ENCODE measurements at regions of chr2 and their contacts with region 1.

Region 1: GRCh38 chr2:10072656-10073480 is 7.3 kb downstream of the CYS1 start:
- DNase-seq: peak; percentile 76
- H3K4me3 ChIP-seq: no peak overlapping the region
- H3K27ac ChIP-seq: no peak overlapping the region
- H3K4me1 ChIP-seq: no peaks in the 10 kb centered on the region
- H3K27me3 ChIP-seq: peaks cover 11 to 14% of the 10 kb centered on the region in 2 experiments
- CTCF ChIP-seq: peak; percentile 87 to 90
- POLR2A ChIP-seq: no peak

Region 2: DNA sequence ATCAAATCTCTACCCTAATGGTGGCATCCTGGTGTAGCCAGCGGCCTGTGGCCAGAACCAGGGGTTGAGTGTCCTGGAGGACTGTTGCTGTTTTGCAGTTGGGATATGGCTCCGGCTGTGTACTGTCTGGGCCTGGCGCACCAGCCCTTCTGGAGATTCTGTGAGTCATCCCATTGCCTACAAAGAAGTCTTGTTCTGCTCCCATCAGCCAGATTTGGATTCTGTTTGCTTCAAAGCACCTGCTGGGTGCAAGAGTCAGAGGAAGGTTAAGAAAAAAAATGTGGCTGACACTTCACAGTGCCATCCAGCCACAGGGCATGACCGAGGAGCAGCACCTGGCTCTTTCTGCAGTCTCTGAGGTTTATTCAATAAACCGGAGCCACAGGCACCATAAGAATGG is 907.2 kb before region 1 on chr2:
- CTCF ChIA-PET with region 1: no interaction called
- POLR2A ChIA-PET with region 1: no interaction called
- dilution Hi-C with region 1: no loop called
- intact Hi-C with region 1: no loop called
- DNase-seq: no peak
- H3K4me3 ChIP-seq: no peak overlapping the region
- H3K27ac ChIP-seq: no peak overlapping the region
- H3K4me1 ChIP-seq: no peaks in the 10 kb centered on the region
- H3K27me3 ChIP-seq: no peaks in the 10 kb centered on the region
- CTCF ChIP-seq: no peak
- POLR2A ChIP-seq: no peak

Region 3: GRCh38 chr2:10057231-10058107 is 15.4 kb before region 1 on chr2:
- CTCF ChIA-PET with region 1: interaction called, 49 read pairs
- POLR2A ChIA-PET with region 1: no interaction called
- dilution Hi-C with region 1: no loop called
- intact Hi-C with region 1: no loop called
- DNase-seq: peak; percentile 31
- H3K4me3 ChIP-seq: no peak overlapping the region
- H3K27ac ChIP-seq: no peak overlapping the region
- H3K4me1 ChIP-seq: peaks cover 4% of the 10 kb centered on the region
- H3K27me3 ChIP-seq: no peaks in the 10 kb centered on the region
- CTCF ChIP-seq: no peak
- POLR2A ChIP-seq: no peak

Region 4: GRCh38 chr2:10103179-10103732 is 30.4 kb after region 1 on chr2:
- CTCF ChIA-PET with region 1: interaction called, 485 read pairs
- POLR2A ChIA-PET with region 1: no interaction called
- dilution Hi-C with region 1: no loop called
- intact Hi-C with region 1: no loop called
- DNase-seq: no peak
- H3K4me3 ChIP-seq: no peak overlapping the region
- H3K27ac ChIP-seq: no peak overlapping the region
- H3K4me1 ChIP-seq: no peaks in the 10 kb centered on the region
- H3K27me3 ChIP-seq: no peaks in the 10 kb centered on the region
- CTCF ChIP-seq: no peak
- POLR2A ChIP-seq: no peak

Region 5: DNA sequence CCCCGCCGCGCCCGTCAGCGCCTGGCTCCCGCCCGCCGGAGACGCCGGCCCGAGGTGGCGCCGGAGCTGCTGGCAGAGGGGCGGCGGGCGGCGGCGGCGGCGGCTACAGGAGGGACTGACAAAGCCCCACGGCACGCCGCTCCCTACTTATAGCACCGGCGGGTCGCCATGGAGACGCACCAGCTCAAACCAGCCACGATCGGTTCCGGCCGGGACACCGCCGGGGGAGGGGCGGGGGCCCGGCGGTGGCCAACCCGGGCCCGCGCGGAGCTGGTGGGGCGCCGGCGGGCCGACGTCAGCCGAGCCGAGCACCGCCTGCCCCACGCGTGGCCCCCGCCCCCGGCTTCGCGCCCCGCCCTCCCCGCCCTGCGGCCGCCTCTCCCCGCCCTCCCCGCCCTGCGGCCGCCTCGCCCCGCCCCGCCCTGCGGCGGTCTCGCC is 375.4 kb after region 1 on chr2 and contains the start of gene ODC1:
- CTCF ChIA-PET with region 1: interaction called, 10 read pairs
- POLR2A ChIA-PET with region 1: no interaction called
- dilution Hi-C with region 1: no loop called
- intact Hi-C with region 1: no loop called
- DNase-seq: peak; percentile 83
- H3K4me3 ChIP-seq: peak within 1 kb of the TSS; percentile 71 to 94 (median 88)
- H3K27ac ChIP-seq: peak within 1 kb of the TSS; percentile 88
- H3K4me1 ChIP-seq: peaks cover 28% of the 10 kb centered on the region
- H3K27me3 ChIP-seq: no peaks in the 10 kb centered on the region
- CTCF ChIP-seq: no peak
- POLR2A ChIP-seq: peak; percentile 64
- total RNA-seq, gene ODC1: 104 and 109 TPM in 2 replicates

Region 6: DNA sequence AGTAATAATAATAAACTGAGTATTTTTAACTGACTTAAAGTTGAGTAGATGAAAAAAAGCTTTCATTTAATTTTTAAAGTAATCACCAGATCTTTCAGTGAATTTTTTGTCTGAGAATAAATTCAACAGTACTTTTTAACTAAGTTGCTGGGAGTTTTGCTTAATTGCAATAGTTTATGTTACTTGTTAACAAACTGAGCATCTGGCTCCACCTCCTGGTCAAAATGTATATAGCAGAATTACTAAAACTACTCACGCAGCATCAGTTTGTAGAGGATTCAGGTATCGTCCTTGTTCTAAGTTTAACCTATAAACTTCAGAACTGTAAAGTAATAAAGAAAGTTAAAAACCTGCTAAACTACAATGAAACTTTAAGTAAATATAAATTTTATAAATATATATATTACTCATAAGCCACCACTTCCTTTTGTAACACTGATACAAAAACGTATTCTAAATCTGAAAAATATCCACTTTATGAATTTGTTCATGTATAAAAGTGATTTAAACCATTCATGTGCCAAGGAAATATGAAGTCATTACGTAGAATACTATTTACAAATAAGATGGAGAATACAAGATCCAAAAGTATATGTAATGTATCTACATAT is 595.6 kb after region 1 on chr2:
- CTCF ChIA-PET with region 1: interaction called, 5 read pairs
- POLR2A ChIA-PET with region 1: no interaction called
- dilution Hi-C with region 1: no loop called
- intact Hi-C with region 1: loop called (anchors 2 kb)
- DNase-seq: peak; percentile 82
- H3K4me3 ChIP-seq: no peak overlapping the region
- H3K27ac ChIP-seq: no peak overlapping the region
- H3K4me1 ChIP-seq: no peaks in the 10 kb centered on the region
- H3K27me3 ChIP-seq: no peaks in the 10 kb centered on the region
- CTCF ChIP-seq: peak; percentile 32 to 39
- POLR2A ChIP-seq: no peak

Measured in endothelial cell of umbilical vein (primary cell).